Cardiac septum (tissue), 1 donor: ENCODE measurements at regions of chr7 and their contacts with region 1.

Region 1: DNA sequence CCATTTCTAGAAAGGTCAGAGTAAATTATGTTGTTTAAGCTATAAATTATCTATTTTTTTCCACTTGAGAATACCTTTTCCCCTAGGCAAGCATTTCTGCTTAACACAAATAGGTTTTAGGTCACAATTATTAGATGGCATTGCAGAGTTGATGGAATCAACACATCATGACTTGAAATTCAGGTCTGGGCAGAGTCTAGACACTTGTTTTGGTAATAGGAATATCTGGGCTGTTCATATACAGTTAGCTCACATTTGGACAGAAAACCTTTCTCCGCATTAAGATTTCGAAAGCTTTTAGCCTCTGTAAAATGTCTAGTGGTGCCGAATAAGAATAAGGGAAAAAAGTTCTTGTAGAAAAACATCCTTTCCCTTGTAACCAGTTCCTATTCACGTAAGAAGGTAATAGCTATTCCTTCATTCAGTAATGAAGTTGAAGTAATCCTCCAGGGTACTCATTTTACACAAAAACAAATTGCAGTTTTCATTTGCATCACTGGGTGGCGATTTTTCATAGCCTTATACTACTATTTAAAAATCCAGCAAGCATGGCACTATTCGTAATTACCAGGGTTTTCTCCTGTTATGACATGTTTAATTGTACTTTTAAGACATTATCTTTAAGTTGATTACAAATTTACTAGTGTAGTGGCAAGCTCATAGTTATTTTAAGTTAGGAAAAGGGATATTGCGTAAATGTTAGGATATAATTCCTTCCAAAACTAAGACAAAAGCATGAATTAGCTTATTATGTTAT is 37.0 kb downstream of the RPA3 start:
- DNase-seq: no peak

Region 2: DNA sequence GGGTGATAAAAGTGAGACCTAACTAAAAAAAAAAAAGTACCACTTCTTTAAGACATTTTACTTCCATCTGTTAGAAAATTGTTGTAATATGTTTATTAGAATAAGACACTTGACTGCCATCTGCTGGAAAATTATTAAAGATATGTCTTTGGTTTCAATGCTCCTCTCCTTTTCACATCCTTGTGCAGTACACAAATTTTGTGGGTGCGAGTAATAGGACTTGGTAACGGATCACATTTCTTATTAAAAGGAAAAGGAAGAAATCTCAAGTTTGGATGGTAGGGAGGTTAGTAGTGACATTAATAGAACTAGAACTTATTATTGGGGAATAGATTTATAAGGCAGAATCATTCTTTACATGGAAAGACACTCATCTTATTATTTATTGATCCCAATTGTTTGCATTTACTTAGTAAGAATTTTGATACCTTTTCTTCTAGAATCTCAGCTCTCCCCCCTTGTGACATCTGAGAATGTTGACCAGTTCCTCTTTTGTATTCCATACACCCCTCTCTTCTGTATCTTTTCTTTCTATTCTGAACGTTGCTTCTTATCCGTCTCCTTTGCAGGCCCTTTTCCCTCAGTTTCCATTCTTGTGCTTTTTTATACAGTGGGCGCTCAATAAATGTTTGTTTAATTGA is 80.1 kb after region 1 on chr7:
- intact Hi-C with region 1: loop called (anchors 1 kb)
- DNase-seq: no peak

Region 3: DNA sequence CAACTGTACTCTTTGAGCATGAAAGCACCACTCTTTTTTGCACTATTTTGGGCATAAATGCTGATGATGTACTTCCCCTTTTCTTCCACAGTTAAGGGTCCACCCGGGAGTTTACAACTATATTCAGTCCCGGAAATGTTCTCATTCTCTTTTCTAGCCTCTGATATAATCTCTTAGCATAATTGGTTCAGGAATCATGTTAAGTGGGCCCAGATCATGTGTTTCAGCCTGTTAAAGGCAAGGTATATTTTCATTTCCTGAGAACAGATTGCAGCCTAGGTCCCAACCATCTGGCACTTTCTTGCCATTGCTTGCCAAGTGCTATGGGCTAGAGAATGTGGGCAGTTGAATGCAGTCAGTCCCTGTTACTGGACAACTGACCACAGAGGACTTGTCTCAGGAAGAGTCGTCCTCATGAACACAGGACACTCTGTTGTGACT is 175.8 kb after region 1 on chr7:
- intact Hi-C with region 1: loop called (anchors 10 kb)
- DNase-seq: no peak

Region 4: GRCh38 chr7:8217200-8218068 is 536.1 kb after region 1 on chr7:
- intact Hi-C with region 1: loop called (anchors 10 kb)
- DNase-seq: no peak

Region 5: GRCh38 chr7:8284606-8285005 is 603.2 kb after region 1 on chr7:
- intact Hi-C with region 1: loop called (anchors 10 kb)
- DNase-seq: no peak